ENCODE measurements at regions of chr4 and their contacts with region 1.

Region 1: GRCh38 chr4:163554870-163555465 is 60.5 kb downstream of the TMA16 start:
- DNase-seq: no peak
- CTCF ChIP-seq: peak; percentile 49

Region 2: GRCh38 chr4:163663454-163664225 is 108.7 kb after region 1 on chr4:
- in situ Hi-C with region 1: loop called (anchors 10 kb)
- DNase-seq: no peak
- CTCF ChIP-seq: peak; percentile 6

Region 3: GRCh38 chr4:164012396-164013027 is 457.5 kb after region 1 on chr4:
- in situ Hi-C with region 1: loop called (anchors 10 kb)
- DNase-seq: peak; percentile 5
- CTCF ChIP-seq: peak; percentile 57

Measured in GM13977 (cell line).